Caco-2 (cell line): ENCODE measurements at regions of chr7 and their contacts with region 1.

Region 1: DNA sequence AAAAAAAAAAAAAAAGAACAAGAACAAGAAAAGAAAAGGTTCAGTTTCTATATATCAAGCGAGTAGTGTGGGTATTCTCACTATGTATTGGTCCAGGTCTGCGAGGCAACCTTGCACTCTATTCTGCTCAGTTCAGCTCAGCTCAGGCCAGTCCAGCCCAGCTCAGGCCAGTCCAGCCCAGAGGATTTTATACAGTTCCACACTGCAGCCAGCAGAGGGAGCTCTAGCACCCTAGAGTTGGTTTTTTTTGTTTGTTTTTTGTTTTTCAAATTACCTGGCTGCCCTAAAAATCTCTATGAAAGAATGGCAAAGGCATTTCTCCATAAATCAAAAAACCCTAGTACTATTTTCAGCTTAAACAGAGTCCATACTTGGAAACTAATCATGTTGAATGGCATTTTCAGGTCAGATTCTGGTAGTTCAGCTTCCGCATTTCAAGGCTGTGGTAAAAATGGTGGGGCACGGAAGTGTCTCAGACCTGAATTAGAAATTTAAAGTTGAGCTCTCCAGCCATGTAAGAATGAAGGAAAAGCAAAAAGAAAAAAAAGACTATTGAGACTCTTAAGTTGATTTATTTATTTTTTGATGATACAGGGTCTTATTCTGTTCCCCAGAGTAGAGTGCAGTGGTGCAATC is 55.2 kb upstream of the GSDME start:
- DNase-seq: peak; percentile 52 to 75
- H3K4me3 ChIP-seq: no peak overlapping the region
- H3K4me3 Mint-ChIP-seq: no peak overlapping the region
- H3K27ac Mint-ChIP-seq: no peak overlapping the region
- H3K4me1 ChIP-seq: no peaks in the 10 kb centered on the region
- H3K4me1 Mint-ChIP-seq: no peaks in the 10 kb centered on the region
- H3K27me3 ChIP-seq: no peaks in the 10 kb centered on the region
- H3K27me3 Mint-ChIP-seq: no peaks in the 10 kb centered on the region
- CTCF ChIP-seq: peak; percentile 90 to 91

Region 2: DNA sequence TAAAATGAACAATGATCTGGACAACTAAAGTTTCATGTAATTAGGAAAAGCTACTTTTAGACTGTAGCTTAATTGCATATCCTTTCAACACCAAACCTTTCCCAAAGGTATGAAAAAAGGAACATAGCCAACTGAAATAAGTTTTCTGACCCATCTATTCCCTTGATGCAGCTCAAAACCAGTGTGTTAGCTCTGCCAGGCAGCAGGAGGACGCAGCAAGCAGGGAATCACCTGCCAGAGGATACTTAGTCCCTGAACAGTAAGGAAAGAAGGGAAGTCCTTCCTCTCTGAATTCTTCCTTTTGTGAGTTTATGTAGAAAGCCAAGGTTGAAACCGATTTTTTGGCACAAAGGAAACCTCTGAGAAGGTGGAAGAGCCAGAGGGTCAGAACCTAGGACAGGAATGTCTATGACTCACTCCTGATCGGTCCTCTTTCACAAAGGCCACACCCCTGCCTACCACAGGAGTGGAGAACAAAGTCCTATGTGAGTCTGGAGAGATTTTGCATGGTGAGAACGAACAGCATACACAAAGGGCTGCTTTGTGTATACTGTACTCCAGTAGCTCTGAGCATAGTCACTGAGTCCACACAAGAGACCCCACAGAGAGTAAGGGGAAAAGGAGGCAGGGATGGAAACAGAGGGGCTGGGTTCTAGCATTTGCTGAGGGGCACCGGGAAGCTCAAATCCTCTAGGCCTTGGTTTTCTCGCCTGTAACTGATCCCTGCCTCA is 13.7 kb after region 1 on chr7:
- CTCF ChIA-PET with region 1: interaction called, 18 read pairs
- POLR2A ChIA-PET with region 1: interaction called, 4 read pairs
- intact Hi-C with region 1: no loop called
- DNase-seq: peak; percentile 80 to 92
- H3K4me3 ChIP-seq: no peak overlapping the region
- H3K4me3 Mint-ChIP-seq: peak overlapping the region; percentile 62
- H3K27ac Mint-ChIP-seq: peak overlapping the region; percentile 94
- H3K4me1 ChIP-seq: peaks cover 76% of the 10 kb centered on the region
- H3K4me1 Mint-ChIP-seq: peaks cover 43% of the 10 kb centered on the region
- H3K27me3 ChIP-seq: no peaks in the 10 kb centered on the region
- H3K27me3 Mint-ChIP-seq: no peaks in the 10 kb centered on the region
- CTCF ChIP-seq: no peak

Region 3: DNA sequence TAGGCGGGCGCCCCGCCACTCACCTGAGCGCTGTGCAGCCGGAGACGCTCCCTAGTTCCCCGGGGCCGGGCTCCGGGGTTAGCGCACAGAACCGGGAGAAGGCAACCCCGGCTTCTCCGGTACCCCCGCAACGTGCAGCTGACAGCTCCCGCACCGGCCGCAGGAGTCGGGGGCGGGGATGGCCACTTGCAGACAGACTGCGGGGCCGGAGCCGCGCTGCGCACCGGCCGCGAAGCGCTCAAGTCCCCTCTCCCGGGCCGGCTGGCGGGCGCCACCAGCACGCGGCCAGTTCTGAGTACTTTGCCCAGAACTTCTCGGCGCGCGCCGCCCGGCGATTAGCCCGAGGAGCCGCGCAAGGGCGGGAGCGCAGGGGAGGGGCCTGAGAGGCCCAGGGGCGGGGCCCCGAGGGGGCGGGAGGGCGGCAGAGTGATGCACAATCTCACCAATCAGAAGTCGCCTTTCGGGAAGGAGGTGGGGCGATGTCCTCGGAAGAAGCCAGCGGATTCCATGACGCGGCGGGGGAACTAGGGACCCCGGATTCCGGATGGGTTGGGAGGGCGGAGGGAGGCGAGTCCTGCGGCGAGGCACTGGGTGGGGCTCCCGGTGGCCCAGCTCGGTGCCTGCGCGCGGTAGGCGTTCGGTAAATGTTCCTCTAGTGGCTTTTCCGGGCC is 167.6 kb after region 1 on chr7 and contains the start of gene OSBPL3:
- CTCF ChIA-PET with region 1: interaction called, 21 read pairs
- POLR2A ChIA-PET with region 1: no interaction called
- intact Hi-C with region 1: loop called (anchors 2 kb)
- DNase-seq: peak; percentile 97
- H3K4me3 ChIP-seq: peak within 1 kb of the TSS; percentile 78
- H3K4me3 Mint-ChIP-seq: peak within 1 kb of the TSS; percentile 85
- H3K27ac Mint-ChIP-seq: peak within 1 kb of the TSS; percentile 96
- H3K4me1 ChIP-seq: peaks cover 23% of the 10 kb centered on the region
- H3K4me1 Mint-ChIP-seq: peaks cover 13% of the 10 kb centered on the region
- H3K27me3 ChIP-seq: no peaks in the 10 kb centered on the region
- H3K27me3 Mint-ChIP-seq: no peaks in the 10 kb centered on the region
- CTCF ChIP-seq: no peak
- total RNA-seq, gene OSBPL3: 43.9 and 45.1 TPM in 2 replicates

Region 4: DNA sequence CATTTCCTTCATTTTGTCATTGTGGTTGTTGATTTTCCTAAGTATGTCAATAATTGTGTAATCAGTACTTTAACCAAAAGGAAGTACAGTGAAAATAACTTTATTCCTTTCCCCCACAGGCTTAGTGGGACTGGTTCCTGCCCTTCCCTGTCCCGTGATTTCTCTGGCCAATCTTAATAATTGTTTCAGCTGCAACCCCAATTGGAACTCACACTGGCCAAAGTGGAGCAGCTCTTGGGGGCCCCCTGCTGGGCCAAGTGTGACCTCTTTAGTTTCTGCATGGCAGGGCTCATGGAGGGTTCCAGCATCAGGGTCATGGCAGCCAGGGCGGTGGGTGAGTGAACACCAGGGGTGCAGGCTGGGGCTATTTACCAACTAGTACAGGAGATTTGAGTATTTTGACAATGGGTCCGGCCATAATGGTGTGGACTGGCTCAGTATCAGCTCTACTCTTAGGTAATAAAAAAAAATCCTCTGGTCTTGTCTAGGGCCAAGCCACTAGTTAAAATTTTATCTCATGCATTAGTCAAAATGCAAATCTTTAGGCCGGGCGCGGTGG is 280.9 kb after region 1 on chr7:
- CTCF ChIA-PET with region 1: interaction called, 78 read pairs
- POLR2A ChIA-PET with region 1: no interaction called
- intact Hi-C with region 1: loop called (anchors 1 kb)
- DNase-seq: peak; percentile 84 to 89
- H3K4me3 ChIP-seq: no peak overlapping the region
- H3K4me3 Mint-ChIP-seq: no peak overlapping the region
- H3K27ac Mint-ChIP-seq: no peak overlapping the region
- H3K4me1 ChIP-seq: no peaks in the 10 kb centered on the region
- H3K4me1 Mint-ChIP-seq: peaks cover 25% of the 10 kb centered on the region
- H3K27me3 ChIP-seq: no peaks in the 10 kb centered on the region
- H3K27me3 Mint-ChIP-seq: peaks cover 3% of the 10 kb centered on the region
- CTCF ChIP-seq: peak; percentile 90 to 93

Region 5: DNA sequence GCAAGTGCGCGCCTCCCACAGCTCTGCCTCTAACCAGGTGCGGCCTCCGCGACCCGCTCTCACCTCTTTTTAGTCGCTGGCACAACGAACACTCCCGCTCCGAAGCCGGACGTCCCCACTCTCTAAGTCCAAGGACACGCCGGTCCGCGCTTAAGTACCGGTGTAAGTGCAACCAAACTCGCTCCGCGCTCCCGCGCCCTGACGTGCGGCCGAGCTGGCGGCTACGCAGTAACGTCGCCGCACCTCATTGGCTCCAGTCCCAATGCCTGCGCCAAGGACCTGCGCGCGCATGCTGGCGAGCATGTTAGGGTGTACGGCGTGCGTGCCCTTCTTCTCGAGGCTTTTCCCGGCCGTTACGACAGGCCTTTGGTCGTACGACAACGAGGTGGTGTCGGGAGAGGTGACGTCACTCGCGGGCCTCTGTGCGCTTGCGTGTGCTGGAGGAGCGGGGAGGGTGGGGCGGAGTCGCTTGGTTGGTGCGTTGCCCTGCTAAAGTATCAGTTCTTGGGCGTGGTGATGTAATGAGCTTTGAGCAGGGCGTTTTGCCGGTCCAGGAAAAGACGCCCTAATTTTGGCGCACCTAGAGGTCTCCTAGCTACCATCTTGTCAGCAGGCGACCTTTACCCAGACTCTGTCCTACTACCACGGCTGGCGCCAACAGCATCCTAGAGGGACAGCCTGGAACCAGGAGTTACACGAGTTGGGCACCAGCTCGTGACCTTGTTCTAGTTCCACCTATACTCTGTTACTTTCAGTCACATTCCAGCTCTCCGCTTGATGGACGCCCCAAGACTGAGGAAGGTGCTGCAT is 312.9 kb after region 1 on chr7 and contains the start of gene CYCS:
- CTCF ChIA-PET with region 1: interaction called, 10 read pairs
- POLR2A ChIA-PET with region 1: interaction called, 3 read pairs
- intact Hi-C with region 1: no loop called
- DNase-seq: peak; percentile 99 to 100
- H3K4me3 ChIP-seq: peak within 1 kb of the TSS; percentile 77
- H3K4me3 Mint-ChIP-seq: peak within 1 kb of the TSS; percentile 88
- H3K27ac Mint-ChIP-seq: peak within 1 kb of the TSS; percentile 96
- H3K4me1 ChIP-seq: peaks cover 16% of the 10 kb centered on the region; the same call in 1 of the 2 replicates
- H3K4me1 Mint-ChIP-seq: peaks cover 19% of the 10 kb centered on the region
- H3K27me3 ChIP-seq: no peaks in the 10 kb centered on the region
- H3K27me3 Mint-ChIP-seq: no peaks in the 10 kb centered on the region
- CTCF ChIP-seq: peak in 1 of 2 experiments; percentile 2
- total RNA-seq, gene CYCS: 156 and 177 TPM in 2 replicates